Activated CD4-positive, alpha-beta T cell treated with anti-CD3 and anti-CD28 coated beads for 36 hours (primary cell): ENCODE measurements at regions of chrX and their contacts with region 1.

Region 1: DNA sequence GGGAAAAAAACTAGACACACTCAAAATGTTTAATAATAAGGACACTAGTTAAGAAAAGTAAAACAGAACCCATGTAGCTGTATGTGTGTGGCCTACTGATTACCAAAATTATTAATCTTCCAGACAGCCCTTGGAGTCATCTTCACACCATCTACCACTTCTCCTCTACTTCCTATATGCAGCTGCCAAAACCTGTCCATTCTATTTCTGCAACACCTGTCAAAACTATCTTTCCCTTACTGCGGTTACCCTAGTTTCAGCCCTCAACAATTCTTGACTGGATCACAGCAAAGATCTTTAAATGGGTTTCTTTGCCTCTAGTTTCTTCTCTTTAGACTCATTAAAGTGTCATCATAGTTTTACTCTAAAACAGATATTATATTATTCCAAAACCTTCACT is 72.6 kb downstream of the GPR82 start:
- DNase-seq: no peak
- ATAC-seq: no peak
- H3K4me3 Mint-ChIP-seq: no peak overlapping the region
- H3K27ac Mint-ChIP-seq: peak overlapping the region; percentile 60
- H3K4me1 Mint-ChIP-seq: peaks cover 33% of the 10 kb centered on the region
- H3K27me3 Mint-ChIP-seq: no peaks in the 10 kb centered on the region

Region 2: DNA sequence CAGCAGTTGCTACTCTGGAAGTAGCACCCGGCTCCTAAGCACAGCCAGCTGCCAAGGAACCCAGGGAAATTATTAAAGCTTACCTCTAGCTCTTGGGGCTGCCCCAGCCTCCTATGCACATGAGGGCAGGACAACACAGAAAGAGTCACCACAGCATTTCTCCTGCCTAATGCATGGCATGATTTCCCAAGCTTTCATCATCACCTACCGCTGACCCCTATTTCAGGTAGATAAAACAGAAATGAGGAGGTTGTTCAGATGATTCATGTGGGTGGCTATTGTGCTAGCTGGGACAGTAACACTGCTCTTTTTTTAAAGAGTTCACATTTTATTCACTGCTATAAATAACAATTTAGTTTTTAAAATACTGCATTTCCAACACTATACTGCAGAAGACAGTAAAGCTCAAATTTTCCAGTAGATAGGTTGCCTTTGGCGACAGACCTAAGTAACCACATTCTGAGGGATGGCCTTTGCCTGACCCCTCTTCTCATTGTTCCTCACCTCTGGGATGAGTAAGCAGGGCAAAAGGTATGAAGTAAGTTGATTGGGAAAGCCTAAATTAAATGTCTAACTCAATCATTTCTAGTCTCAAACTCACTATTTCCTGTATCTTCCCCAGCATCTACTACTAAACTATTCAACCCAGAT is 110.1 kb after region 1 on chrX:
- CTCF ChIA-PET with region 1: no interaction called
- POLR2A ChIA-PET with region 1: no interaction called
- intact Hi-C with region 1: loop called in 1 of 2 experiments (anchors 5 kb)
- DNase-seq: peak; percentile 55
- ATAC-seq: peak; percentile 72
- H3K4me3 Mint-ChIP-seq: no peak overlapping the region
- H3K27ac Mint-ChIP-seq: peak overlapping the region; percentile 72
- H3K4me1 Mint-ChIP-seq: peaks cover 44% of the 10 kb centered on the region
- H3K27me3 Mint-ChIP-seq: no peaks in the 10 kb centered on the region